Heart left ventricle (tissue), 16 donors: ENCODE measurements at regions of chr2 and their contacts with region 1.

Region 1: GRCh38 chr2:134368009-134368817 is 114.3 kb downstream of the MGAT5 start:
- DNase-seq: no peak
- ATAC-seq: peak in 3 of 4 donors; percentile 21 to 47 (median 21)
- H3K4me3 ChIP-seq: no peak overlapping the region
- H3K27ac ChIP-seq: peak overlapping the region in 8 of 12 donors; percentile 8 to 64 (median 46)
- H3K4me1 ChIP-seq: peaks cover 0 to 77% (median 54%) of the 10 kb centered on the region in 12 donors
- H3K27me3 ChIP-seq: no peaks in the 10 kb centered on the region
- CTCF ChIP-seq: no peak
- POLR2A ChIP-seq: no peak

Region 2: GRCh38 chr2:134275058-134275862 is 93.0 kb before region 1 on chr2:
- intact Hi-C with region 1: loop called in 1 of 10 experiments (anchors 10 kb)
- DNase-seq: no peak
- ATAC-seq: no peak
- H3K4me3 ChIP-seq: no peak overlapping the region
- H3K27ac ChIP-seq: no peak overlapping the region
- H3K4me1 ChIP-seq: peaks cover 0 to 77% (median 52%) of the 10 kb centered on the region in 12 donors
- H3K27me3 ChIP-seq: no peaks in the 10 kb centered on the region
- CTCF ChIP-seq: no peak
- POLR2A ChIP-seq: no peak

Region 3: GRCh38 chr2:134623796-134624195 is 255.6 kb after region 1 on chr2:
- intact Hi-C with region 1: no loop called
- DNase-seq: no peak
- ATAC-seq: no peak
- H3K4me3 ChIP-seq: no peak overlapping the region
- H3K27ac ChIP-seq: no peak overlapping the region
- H3K4me1 ChIP-seq: no peaks in the 10 kb centered on the region
- H3K27me3 ChIP-seq: no peaks in the 10 kb centered on the region
- CTCF ChIP-seq: no peak
- POLR2A ChIP-seq: no peak